Endothelial cell of umbilical vein (primary cell): ENCODE measurements at regions of chr3 and their contacts with region 1.

Region 1: DNA sequence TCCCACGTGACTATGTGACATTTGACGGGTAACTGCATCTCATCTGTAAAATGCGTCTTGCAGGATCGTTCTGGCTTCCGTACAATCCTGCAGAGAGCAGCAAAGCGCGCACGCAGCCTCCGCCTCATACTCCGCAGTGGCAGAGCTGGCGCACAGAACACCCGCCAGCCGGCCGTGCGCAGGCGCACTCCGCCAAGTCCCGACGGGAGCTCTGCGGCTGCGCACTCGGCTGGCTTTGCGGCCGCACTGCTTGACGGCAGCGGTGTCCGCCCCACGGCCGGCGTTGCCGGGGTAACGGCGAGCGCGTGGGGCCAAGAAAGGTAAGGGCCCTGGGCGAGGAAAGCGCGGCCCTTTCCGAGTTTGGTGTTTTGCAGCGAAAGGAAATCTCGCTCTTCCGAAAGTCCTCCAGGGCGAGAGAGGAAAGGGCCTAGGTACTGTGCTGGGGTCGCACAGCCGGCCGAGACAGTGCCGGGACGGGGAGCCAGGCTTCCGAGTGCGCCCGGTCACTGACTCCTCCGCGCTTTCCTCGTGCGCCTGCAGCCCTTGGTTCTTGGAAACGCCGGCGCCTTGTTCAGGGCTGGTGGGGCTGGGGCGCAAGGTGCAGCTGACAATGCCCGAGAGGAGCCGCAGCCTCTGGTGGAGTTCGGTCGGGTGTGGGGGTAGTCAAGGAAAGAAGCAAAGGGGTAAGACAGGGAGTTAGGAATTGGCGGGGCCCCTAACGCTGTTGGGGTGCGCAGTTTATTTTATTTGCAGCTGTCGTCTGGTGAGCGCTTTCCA is at the start of gene TSEN2:
- DNase-seq: peak; percentile 96
- H3K4me3 ChIP-seq: peak within 1 kb of the TSS; percentile 51 to 59 (median 58)
- H3K27ac ChIP-seq: no peak within 1 kb of the TSS
- H3K4me1 ChIP-seq: peaks cover 23% of the 10 kb centered on the region
- H3K27me3 ChIP-seq: no peaks in the 10 kb centered on the region
- CTCF ChIP-seq: no peak
- POLR2A ChIP-seq: peak; percentile 86
- total RNA-seq, gene TSEN2: 12.1 and 12.6 TPM in 2 replicates

Region 2: GRCh38 chr3:11944052-11944673 is 540.2 kb before region 1 on chr3:
- CTCF ChIA-PET with region 1: interaction called, 10 read pairs
- POLR2A ChIA-PET with region 1: no interaction called
- dilution Hi-C with region 1: no loop called
- intact Hi-C with region 1: loop called (anchors 2 kb)
- DNase-seq: peak; percentile 42
- H3K4me3 ChIP-seq: no peak overlapping the region
- H3K27ac ChIP-seq: no peak overlapping the region
- H3K4me1 ChIP-seq: no peaks in the 10 kb centered on the region
- H3K27me3 ChIP-seq: no peaks in the 10 kb centered on the region
- CTCF ChIP-seq: peak; percentile 60 to 67
- POLR2A ChIP-seq: no peak

Region 3: DNA sequence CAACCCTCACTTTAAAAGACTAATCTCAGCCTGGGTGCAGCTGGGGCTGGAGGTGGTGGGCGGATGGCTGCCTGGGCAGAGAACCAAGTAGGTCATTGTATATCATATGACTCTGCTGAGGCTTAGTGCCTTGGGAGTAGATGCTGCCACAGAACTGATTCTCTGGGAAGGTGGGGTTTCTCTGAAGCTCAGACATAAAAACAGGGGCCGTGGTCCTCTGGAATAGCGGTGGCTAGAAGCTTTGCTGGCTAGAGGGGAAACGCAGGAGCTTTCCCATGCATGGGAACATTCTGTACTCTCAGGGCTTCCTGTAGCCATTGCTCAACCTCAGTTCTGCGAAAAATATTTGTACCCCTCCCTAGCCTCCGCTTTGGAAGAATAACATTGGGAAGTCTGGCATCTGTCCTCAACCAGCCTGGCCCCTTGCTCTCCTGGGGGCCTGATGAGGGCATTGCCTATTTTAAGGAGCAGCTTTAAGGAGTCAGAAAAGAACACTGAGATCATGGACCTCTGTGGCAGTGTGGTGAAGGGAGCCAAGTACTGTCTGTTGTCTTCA is 340.4 kb before region 1 on chr3:
- CTCF ChIA-PET with region 1: interaction called, 256 read pairs
- POLR2A ChIA-PET with region 1: no interaction called
- dilution Hi-C with region 1: no loop called
- intact Hi-C with region 1: loop called (anchors 1 kb)
- DNase-seq: no peak
- H3K4me3 ChIP-seq: no peak overlapping the region
- H3K27ac ChIP-seq: no peak overlapping the region
- H3K4me1 ChIP-seq: no peaks in the 10 kb centered on the region
- H3K27me3 ChIP-seq: peaks cover 5 to 8% of the 10 kb centered on the region in 2 experiments
- CTCF ChIP-seq: no peak
- POLR2A ChIP-seq: no peak

Region 4: DNA sequence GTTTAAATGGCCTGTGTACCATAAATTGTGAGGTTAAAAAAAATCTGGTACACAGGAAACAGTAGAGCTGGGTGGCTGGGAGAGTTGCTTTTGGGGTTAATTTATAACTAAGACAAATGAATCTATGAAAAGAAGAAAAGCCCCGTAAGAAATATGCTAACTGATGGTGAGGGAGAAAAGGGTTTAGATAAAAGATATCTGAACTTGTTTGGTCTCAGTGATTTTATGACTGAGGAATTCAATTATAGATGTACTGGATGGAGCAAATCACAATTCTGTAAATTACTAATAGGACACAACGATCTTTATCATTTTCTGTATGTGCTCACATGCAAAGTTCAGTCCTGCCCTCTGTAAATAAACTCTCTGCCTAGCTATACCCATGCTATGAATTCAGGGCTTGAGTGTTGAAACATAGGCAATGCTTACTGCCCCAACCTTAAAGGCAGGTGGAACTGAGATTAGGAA is 167.6 kb before region 1 on chr3:
- CTCF ChIA-PET with region 1: interaction called, 3 read pairs
- POLR2A ChIA-PET with region 1: no interaction called
- dilution Hi-C with region 1: no loop called
- intact Hi-C with region 1: loop called (anchors 5 kb)
- DNase-seq: no peak
- H3K4me3 ChIP-seq: no peak overlapping the region
- H3K27ac ChIP-seq: no peak overlapping the region
- H3K4me1 ChIP-seq: peaks cover 10% of the 10 kb centered on the region
- H3K27me3 ChIP-seq: peaks cover 3 to 15% of the 10 kb centered on the region in 2 experiments
- CTCF ChIP-seq: no peak
- POLR2A ChIP-seq: no peak

Region 5: GRCh38 chr3:12471243-12471651 is 13.1 kb before region 1 on chr3:
- CTCF ChIA-PET with region 1: interaction called, 16 read pairs
- POLR2A ChIA-PET with region 1: no interaction called
- dilution Hi-C with region 1: no loop called
- intact Hi-C with region 1: no loop called
- DNase-seq: no peak
- H3K4me3 ChIP-seq: no peak overlapping the region
- H3K27ac ChIP-seq: no peak overlapping the region
- H3K4me1 ChIP-seq: peaks cover 5% of the 10 kb centered on the region
- H3K27me3 ChIP-seq: no peaks in the 10 kb centered on the region
- CTCF ChIP-seq: no peak
- POLR2A ChIP-seq: no peak

Region 6: GRCh38 chr3:12719984-12720898 is 235.9 kb after region 1 on chr3:
- CTCF ChIA-PET with region 1: interaction called, 3 read pairs
- POLR2A ChIA-PET with region 1: no interaction called
- dilution Hi-C with region 1: no loop called
- intact Hi-C with region 1: loop called (anchors 1 kb)
- DNase-seq: peak; percentile 85
- H3K4me3 ChIP-seq: no peak overlapping the region
- H3K27ac ChIP-seq: no peak overlapping the region
- H3K4me1 ChIP-seq: no peaks in the 10 kb centered on the region
- H3K27me3 ChIP-seq: no peaks in the 10 kb centered on the region
- CTCF ChIP-seq: peak; percentile 82 to 90
- POLR2A ChIP-seq: no peak